Caco-2 (cell line): ENCODE measurements at regions of chr12 and their contacts with region 1.

Region 1: DNA sequence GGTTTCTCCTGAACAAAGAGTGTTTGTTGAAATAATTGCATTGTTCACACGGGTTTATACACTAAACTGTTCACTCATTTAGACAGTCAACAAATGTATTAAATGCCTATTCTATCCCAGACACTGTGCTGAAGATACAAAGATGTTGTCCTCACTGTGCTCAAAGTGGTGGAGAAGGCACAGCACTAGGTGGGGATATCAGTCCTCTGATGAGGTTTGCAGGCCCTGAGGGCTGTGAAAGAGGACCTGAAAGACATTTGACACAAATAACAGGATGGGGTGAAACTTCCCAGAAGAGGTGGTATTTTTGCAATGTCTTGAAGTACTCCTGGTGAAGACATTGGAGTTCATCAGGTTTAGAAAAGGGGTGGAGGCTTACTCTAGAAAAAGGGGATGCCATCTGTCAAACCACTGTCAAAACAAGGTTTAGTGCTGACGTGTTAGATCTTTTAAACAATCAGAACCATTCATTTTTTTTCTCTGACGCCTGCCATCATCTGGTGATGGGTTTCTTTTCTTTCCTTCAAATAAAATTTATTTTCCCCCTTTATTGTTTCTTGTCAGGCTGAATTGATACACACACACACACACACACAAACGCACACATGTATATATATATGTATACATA is 69.5 kb downstream of the ACSS3 start:
- DNase-seq: peak; percentile 49 to 50
- H3K4me3 ChIP-seq: no peak overlapping the region
- H3K4me3 Mint-ChIP-seq: peak overlapping the region; percentile 30
- H3K27ac Mint-ChIP-seq: peak overlapping the region; percentile 65
- H3K4me1 ChIP-seq: peaks cover 45% of the 10 kb centered on the region
- H3K4me1 Mint-ChIP-seq: peaks cover 23% of the 10 kb centered on the region
- H3K27me3 ChIP-seq: no peaks in the 10 kb centered on the region
- H3K27me3 Mint-ChIP-seq: no peaks in the 10 kb centered on the region
- CTCF ChIP-seq: no peak

Region 2: DNA sequence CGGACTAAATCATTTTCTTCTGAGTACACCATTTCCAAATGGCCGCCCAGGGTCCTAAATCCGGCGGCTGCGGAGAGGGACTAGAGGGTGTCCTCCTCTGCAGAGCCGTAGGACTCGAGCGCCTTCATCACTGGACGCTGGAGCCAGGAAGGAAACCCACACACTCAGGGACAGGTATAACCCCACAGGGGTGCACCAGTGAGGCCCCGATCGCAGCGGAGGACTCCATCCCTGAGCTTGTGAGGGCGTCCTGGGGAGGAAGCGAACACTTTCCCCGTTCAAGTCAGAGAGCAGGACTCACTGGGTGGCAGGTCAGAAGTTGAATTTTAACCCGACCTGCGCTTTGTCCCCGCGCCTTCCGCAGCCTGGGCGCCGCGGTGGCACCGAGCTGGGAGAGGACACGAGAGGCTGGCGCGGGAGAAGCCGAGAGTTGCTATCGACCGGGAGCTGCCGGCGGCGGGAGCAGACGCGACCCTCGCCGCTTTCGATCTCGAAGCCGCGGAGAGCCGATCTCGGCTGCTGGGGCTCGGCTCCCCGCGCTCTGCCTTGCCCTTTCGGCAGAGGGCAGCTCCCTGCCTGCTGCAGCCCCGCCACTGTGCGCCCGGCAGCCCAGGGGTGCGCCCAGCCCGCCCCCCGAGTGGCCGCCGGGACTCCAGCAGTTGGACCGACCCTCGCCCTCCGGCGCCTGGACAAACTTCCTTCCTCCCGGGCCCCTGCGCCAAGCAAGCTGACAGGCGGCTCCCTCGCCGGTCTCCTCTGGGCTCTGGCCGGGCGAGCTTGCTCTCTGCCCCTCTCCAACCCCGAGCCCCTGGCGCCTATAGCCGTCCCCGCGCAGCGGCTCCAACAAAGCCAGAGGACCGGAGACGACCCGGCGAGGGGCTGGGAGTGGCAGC is 210.7 kb before region 1 on chr12:
- CTCF ChIA-PET with region 1: no interaction called
- POLR2A ChIA-PET with region 1: no interaction called
- intact Hi-C with region 1: loop called (anchors 5 kb)
- DNase-seq: peak; percentile 42 to 58
- H3K4me3 ChIP-seq: peak overlapping the region; percentile 84
- H3K4me3 Mint-ChIP-seq: peak overlapping the region; percentile 86
- H3K27ac Mint-ChIP-seq: peak overlapping the region; percentile 69
- H3K4me1 ChIP-seq: no peaks in the 10 kb centered on the region
- H3K4me1 Mint-ChIP-seq: peaks cover 7% of the 10 kb centered on the region
- H3K27me3 ChIP-seq: no peaks in the 10 kb centered on the region
- H3K27me3 Mint-ChIP-seq: peaks cover 2% of the 10 kb centered on the region
- CTCF ChIP-seq: peak in 1 of 2 experiments; percentile 3

Region 3: GRCh38 chr12:80988986-80989385 is 158.4 kb before region 1 on chr12:
- CTCF ChIA-PET with region 1: no interaction called
- POLR2A ChIA-PET with region 1: no interaction called
- intact Hi-C with region 1: no loop called
- DNase-seq: no peak
- H3K4me3 ChIP-seq: no peak overlapping the region
- H3K4me3 Mint-ChIP-seq: no peak overlapping the region
- H3K27ac Mint-ChIP-seq: no peak overlapping the region
- H3K4me1 ChIP-seq: no peaks in the 10 kb centered on the region
- H3K4me1 Mint-ChIP-seq: no peaks in the 10 kb centered on the region
- H3K27me3 ChIP-seq: no peaks in the 10 kb centered on the region
- H3K27me3 Mint-ChIP-seq: peaks cover 3% of the 10 kb centered on the region
- CTCF ChIP-seq: no peak

Region 4: GRCh38 chr12:81203671-81204204 is 56.3 kb after region 1 on chr12:
- CTCF ChIA-PET with region 1: no interaction called
- POLR2A ChIA-PET with region 1: no interaction called
- intact Hi-C with region 1: loop called (anchors 2 kb)
- DNase-seq: no peak
- H3K4me3 ChIP-seq: no peak overlapping the region
- H3K4me3 Mint-ChIP-seq: no peak overlapping the region
- H3K27ac Mint-ChIP-seq: no peak overlapping the region
- H3K4me1 ChIP-seq: peaks cover 42% of the 10 kb centered on the region
- H3K4me1 Mint-ChIP-seq: peaks cover 18% of the 10 kb centered on the region
- H3K27me3 ChIP-seq: no peaks in the 10 kb centered on the region
- H3K27me3 Mint-ChIP-seq: no peaks in the 10 kb centered on the region
- CTCF ChIP-seq: no peak

Region 5: DNA sequence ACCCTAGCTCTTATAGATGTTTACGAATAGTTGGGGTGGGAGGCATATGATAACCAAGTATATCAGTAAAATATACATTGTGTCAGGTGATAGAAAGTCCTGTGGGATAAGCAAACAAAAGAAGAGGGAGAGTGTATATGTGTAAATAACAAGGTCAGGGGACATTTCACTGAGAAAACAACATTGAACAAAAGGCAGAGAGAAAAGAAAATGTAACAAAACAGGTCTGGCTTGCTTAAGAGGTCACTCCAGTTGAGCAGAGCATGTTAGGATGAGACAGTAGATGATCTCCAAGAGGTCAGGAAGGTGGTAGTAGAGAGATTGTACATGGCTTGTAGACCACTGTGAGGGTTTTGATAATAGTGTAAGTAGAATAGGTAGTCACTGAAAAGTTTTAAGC is 234.6 kb after region 1 on chr12:
- CTCF ChIA-PET with region 1: no interaction called
- POLR2A ChIA-PET with region 1: no interaction called
- intact Hi-C with region 1: loop called (anchors 5 kb)
- DNase-seq: peak in 1 of 2 experiments; percentile 64
- H3K4me3 ChIP-seq: no peak overlapping the region
- H3K4me3 Mint-ChIP-seq: no peak overlapping the region
- H3K27ac Mint-ChIP-seq: no peak overlapping the region
- H3K4me1 ChIP-seq: peaks cover 21% of the 10 kb centered on the region
- H3K4me1 Mint-ChIP-seq: peaks cover 6% of the 10 kb centered on the region
- H3K27me3 ChIP-seq: no peaks in the 10 kb centered on the region
- H3K27me3 Mint-ChIP-seq: no peaks in the 10 kb centered on the region
- CTCF ChIP-seq: no peak